ENCODE measurements at regions of chr9 and their contacts with region 1.

Region 1: GRCh38 chr9:29730163-29730562 is 2156.9 kb upstream of the C9orf72 start:
- DNase-seq: no peak
- H3K4me3 ChIP-seq: no peak overlapping the region
- H3K27ac ChIP-seq: no peak overlapping the region
- H3K4me1 ChIP-seq: no peaks in the 10 kb centered on the region
- H3K27me3 ChIP-seq: no peaks in the 10 kb centered on the region
- CTCF ChIP-seq: no peak
- EP300 ChIP-seq: no peak
- POLR2A ChIP-seq: no peak

Region 2: GRCh38 chr9:29796291-29796952 is 66.3 kb after region 1 on chr9:
- intact Hi-C with region 1: no loop called
- DNase-seq: no peak
- H3K4me3 ChIP-seq: no peak overlapping the region
- H3K27ac ChIP-seq: no peak overlapping the region
- H3K4me1 ChIP-seq: no peaks in the 10 kb centered on the region
- H3K27me3 ChIP-seq: no peaks in the 10 kb centered on the region
- CTCF ChIP-seq: no peak
- EP300 ChIP-seq: no peak
- POLR2A ChIP-seq: no peak

Region 3: DNA sequence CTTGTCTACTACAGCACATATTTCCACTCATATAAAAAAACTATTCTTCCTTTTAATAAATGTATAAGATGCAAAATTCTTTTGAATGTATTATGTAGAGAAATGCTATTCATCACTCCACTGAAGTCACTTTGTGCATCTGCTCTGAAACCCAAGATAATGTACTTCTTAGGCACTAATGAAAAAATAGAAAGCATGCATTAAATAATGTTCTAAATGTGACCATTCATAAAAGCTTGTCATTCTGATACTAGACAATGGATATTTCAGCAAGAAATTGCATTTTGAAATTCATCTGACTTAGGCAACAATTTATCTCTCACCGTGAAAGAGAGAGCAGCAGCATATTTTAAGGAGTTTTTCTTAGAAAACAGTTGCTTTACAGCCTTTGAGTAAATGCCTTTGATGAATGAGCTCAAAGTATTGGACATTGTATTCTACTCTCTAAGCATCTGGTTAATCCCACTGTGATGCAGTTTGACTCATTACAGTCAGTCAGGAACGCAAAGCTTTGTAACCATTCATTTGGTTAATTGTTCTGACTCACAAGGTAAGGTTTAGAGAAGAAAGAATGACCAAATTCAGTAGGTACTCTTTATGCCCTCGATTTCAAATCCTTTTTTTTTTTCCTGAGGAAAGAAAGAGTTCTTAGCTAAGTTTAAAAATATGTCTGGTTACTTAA is 76.9 kb after region 1 on chr9:
- intact Hi-C with region 1: loop called in 1 of 4 experiments (anchors 2 kb)
- DNase-seq: no peak
- H3K4me3 ChIP-seq: no peak overlapping the region
- H3K27ac ChIP-seq: no peak overlapping the region
- H3K4me1 ChIP-seq: no peaks in the 10 kb centered on the region
- H3K27me3 ChIP-seq: no peaks in the 10 kb centered on the region
- CTCF ChIP-seq: no peak
- EP300 ChIP-seq: no peak
- POLR2A ChIP-seq: no peak

Region 4: DNA sequence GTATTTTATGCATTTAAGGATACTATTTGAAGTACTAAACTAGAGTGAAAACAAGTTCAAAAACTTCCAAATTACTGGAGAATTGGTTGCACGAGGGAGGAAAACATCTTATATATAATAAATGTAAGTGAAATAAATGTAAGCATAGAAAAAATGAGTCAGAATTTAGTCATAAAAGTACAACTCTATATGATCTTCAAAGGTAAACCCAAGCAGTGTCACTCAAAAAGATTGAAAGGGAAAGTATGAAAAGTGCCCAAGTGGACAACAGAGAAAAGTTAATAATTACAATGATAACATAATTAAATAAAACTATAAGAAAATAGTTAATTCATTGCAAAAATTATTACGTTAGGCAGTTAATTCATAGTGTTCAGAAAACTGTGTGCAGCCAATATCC is 131.6 kb after region 1 on chr9:
- intact Hi-C with region 1: no loop called
- DNase-seq: no peak
- H3K4me3 ChIP-seq: no peak overlapping the region
- H3K27ac ChIP-seq: no peak overlapping the region
- H3K4me1 ChIP-seq: no peaks in the 10 kb centered on the region
- H3K27me3 ChIP-seq: no peaks in the 10 kb centered on the region
- CTCF ChIP-seq: no peak
- EP300 ChIP-seq: no peak
- POLR2A ChIP-seq: no peak

Measured in ovary (tissue), 10 donors.